ENCODE measurements at regions of chr1 and their contacts with region 1.

Region 1: GRCh38 chr1:233025157-233025915 is 74.9 kb downstream of the NTPCR start:
- DNase-seq: peak in 5 of 10 donors; percentile 36 to 61 (median 51)
- H3K4me3 ChIP-seq: no peak overlapping the region
- H3K27ac ChIP-seq: no peak overlapping the region
- H3K27me3 ChIP-seq: no peaks in the 10 kb centered on the region
- CTCF ChIP-seq: peak in 50 of 56 donors; percentile 15 to 71 (median 47)

Region 2: GRCh38 chr1:232635778-232636356 is 389.5 kb before region 1 on chr1:
- intact Hi-C with region 1: loop called (anchors 5 to 10 kb)
- DNase-seq: no peak
- H3K4me3 ChIP-seq: peak overlapping the region in 1 of 59 donors; percentile 4
- H3K27ac ChIP-seq: no peak overlapping the region
- H3K27me3 ChIP-seq: no peaks in the 10 kb centered on the region
- CTCF ChIP-seq: peak; percentile 68 to 97 (median 87)